Activated T-helper 1 cell treated with anti-CD3 and anti-CD28 coated beads, Interleukin-12 subunit alpha, Interleukin-12 subunit beta, Interleukin-2, Interleukin-4 antibody, amounts not matched to agents 30 ng/mL and 10 ng/mL and 1 ng/mL, durations not matched to agents 14 hours and 24 hours and 36 hours (primary cell): ENCODE measurements at regions of chr6 and their contacts with region 1.

Region 1: DNA sequence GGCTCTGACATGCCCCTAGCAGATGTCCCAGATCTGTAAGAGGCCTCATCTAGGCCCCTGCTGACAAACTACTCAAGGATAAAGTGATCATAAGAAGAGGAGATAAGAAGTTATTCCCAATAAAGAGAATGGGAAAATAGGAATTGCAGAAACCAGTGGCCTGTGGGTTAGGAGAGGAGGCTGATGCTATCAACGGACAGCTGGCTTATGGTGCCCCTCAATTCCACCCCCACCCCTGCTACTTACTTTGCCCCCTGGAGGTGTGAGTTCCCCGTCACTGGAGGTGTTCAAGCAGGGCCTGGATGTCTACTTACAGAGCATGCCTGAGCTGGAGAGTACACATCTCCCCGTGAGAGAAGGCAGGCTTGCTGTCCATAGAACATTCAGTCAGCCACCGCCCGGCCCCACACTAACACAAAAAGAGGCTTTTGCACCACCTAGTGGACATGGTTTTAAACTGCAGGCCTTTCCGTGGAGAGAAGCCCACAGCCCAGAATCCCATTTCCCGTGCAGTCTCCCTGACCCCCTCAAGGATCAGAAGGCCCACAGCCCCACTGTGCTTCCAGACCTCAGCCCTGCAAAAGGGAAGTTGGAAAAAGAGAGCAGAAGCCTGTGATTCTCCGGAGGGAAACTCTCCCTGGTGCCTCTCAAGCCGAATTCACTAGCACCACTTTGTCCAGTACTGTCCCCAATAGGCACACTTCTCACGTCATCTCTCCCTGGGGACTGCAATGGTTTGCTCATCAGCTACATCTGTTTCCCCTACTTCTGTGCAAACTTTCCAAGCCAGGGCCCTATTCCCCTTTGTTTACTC is 23.8 kb upstream of the BNIP5 start:
- DNase-seq: peak; percentile 56
- H3K4me3 Mint-ChIP-seq: no peak overlapping the region
- H3K27ac Mint-ChIP-seq: no peak overlapping the region
- H3K4me1 Mint-ChIP-seq: peaks cover 45% of the 10 kb centered on the region
- H3K27me3 Mint-ChIP-seq: peaks cover 16% of the 10 kb centered on the region

Region 2: DNA sequence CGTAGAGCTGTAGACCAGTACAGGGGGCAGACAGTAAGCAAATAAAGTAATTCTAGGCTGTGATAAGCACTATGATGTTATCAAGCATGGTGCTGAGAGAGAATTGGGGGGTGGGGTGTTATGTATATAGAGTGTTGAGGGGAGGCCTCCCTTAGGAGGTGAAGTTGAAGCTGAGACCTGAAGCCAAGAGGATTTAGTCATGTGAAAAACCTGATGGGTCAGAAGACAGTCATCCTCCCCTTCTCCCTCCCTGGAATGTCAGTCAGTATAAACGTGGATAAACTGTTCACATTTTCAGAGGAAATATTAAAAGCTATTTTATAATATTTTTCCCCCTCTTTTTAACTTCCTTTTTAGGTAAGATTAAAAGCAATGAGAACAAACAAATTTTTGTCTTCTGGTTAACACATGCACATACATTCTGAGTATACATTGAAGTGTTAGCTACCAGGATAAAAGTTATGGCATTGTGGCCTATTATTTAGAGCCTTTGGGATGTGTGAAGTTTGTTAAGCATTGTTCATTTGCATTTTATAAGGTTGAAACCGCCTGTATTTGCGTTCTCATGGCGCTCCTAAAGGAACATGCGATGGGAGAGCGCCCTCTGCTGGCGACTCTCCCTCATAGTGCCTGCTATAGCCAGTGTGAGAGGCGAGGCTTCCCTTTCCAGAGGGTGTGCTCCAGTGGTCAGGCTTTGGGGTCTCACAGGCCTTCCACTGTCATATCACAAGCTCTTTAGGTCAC is 265.5 kb before region 1 on chr6:
- intact Hi-C with region 1: loop called (anchors 1 kb)
- DNase-seq: peak; percentile 67
- H3K4me3 Mint-ChIP-seq: no peak overlapping the region
- H3K27ac Mint-ChIP-seq: peak overlapping the region; percentile 47
- H3K4me1 Mint-ChIP-seq: peaks cover 30% of the 10 kb centered on the region
- H3K27me3 Mint-ChIP-seq: no peaks in the 10 kb centered on the region

Region 3: DNA sequence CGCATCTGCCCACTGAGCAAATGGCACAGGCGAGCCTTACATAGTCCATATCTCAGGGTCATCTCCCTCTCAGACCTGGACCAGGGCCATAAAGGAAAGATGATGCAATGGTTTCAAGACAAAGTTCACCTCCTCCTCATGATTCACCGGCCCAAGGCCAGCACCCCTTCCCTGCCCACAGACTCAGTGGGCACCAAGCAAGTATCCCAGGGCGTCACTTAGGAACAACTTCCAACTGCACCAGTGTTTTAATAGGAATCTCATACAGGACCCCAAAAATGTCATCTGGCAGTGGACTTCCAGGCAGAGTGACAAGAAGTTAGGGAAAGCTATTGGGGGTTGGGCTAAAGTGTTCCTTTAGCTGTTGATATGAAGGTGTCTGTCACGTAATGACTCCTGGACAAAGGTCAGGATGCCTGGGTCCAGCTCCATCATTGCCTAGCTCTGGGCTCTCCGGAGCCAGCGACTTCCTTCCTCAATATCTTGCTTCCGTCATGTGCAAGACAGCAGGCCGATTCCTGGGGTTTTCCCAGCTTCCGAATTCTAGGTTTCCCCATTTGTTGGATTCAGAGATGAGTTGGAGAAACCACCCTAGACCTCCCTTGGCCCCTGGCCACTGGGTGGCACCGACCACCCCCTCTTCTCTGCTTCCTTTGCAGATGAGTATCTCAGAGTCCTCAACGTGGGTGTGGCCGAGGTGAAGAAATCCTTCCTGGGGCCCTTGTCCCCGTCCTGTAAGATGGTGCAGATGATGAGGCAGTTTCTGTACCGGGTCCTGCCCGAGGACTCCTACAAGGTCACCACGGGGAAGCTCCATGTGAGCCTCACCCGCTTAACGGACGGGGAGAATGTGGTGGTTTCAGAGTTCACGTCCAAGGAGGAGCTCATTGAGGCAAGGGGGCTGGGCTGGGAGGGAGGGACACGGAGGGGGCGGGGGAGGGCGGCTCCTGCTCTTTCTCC is 69.5 kb before region 1 on chr6:
- intact Hi-C with region 1: no loop called
- DNase-seq: no peak
- H3K4me3 Mint-ChIP-seq: no peak overlapping the region
- H3K27ac Mint-ChIP-seq: no peak overlapping the region
- H3K4me1 Mint-ChIP-seq: no peaks in the 10 kb centered on the region
- H3K27me3 Mint-ChIP-seq: peaks cover 4% of the 10 kb centered on the region

Region 4: GRCh38 chr6:36302227-36302976 is 58.0 kb before region 1 on chr6:
- intact Hi-C with region 1: loop called (anchors 1 kb)
- DNase-seq: peak; percentile 85
- H3K4me3 Mint-ChIP-seq: no peak overlapping the region
- H3K27ac Mint-ChIP-seq: peak overlapping the region; percentile 18
- H3K4me1 Mint-ChIP-seq: peaks cover 8% of the 10 kb centered on the region
- H3K27me3 Mint-ChIP-seq: peaks cover 24% of the 10 kb centered on the region

Region 5: GRCh38 chr6:36340618-36341454 is 19.6 kb before region 1 on chr6:
- intact Hi-C with region 1: loop called (anchors 1 kb)
- DNase-seq: peak; percentile 59
- H3K4me3 Mint-ChIP-seq: peak overlapping the region; percentile 51
- H3K27ac Mint-ChIP-seq: no peak overlapping the region
- H3K4me1 Mint-ChIP-seq: peaks cover 17% of the 10 kb centered on the region
- H3K27me3 Mint-ChIP-seq: peaks cover 27% of the 10 kb centered on the region